ENCODE measurements at regions of chr10 and their contacts with region 1.

Region 1: GRCh38 chr10:101782811-101783735 is at the start of gene NPM3:
- DNase-seq: peak; percentile 78
- ATAC-seq: peak; percentile 66
- H3K4me3 ChIP-seq: peak within 1 kb of the TSS; percentile 18 to 73 (median 67)
- H3K4me3 Mint-ChIP-seq: peak within 1 kb of the TSS; percentile 99
- H3K27ac ChIP-seq: peak within 1 kb of the TSS; percentile 8 to 69
- H3K27ac Mint-ChIP-seq: peak within 1 kb of the TSS; percentile 90
- H3K4me1 ChIP-seq: peaks cover 32 to 57% of the 10 kb centered on the region in 2 donors
- H3K4me1 Mint-ChIP-seq: peaks cover 55% of the 10 kb centered on the region
- H3K27me3 ChIP-seq: peaks cover 0 to 16% (median 7%) of the 10 kb centered on the region in 4 experiments
- H3K27me3 Mint-ChIP-seq: peaks cover 6% of the 10 kb centered on the region
- CTCF ChIP-seq: no peak
- total RNA-seq, gene NPM3: 13.4 and 13.5 TPM in 2 replicates

Region 2: DNA sequence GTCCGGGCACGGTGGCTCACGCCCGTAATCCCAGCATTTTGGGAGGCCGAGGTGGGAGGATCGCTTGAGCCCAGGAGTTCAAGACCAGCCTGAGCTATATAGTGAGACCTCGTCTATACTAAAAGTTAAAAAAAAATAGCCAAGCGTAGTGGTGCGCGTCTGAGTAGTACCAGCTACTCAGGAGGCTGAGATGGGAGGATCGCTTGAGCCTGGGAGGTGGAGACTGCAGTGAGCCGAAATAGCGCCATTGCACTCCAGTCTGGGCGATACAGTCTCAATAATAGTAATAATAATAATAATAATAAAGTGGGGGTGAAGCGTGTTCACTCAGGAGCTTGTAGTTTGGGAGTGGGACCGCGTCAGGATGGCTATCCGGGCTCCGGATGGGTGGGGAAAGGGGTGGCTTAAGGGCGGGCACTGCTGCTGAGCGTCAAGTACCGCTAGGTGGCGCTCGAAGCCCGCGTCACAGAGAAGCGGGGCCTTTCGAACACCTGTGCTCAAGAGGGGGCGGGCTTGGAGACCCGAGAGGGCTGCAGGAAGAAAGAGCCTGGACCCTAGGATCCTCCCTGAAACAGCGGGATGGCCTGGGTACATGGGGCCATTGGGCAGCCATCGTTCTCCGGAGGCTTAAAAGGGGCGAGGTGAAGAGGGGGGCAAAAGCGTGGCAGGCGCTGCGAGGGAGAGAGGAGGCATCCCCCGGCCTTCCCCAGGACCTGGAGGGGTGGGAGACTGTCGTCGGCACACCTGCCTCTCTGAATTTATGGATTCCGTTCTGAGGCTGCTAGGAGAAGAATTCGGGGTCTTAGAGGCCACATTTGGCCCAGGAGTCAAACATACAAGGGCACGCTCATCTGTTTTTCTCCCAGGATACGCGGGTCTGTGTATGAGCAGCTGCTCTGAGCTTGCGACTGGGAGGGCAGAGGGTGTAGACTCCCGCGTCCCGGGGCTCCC is 568.4 kb before region 1 on chr10:
- CTCF ChIA-PET with region 1: interaction called, 23 read pairs
- POLR2A ChIA-PET with region 1: no interaction called
- intact Hi-C with region 1: no loop called
- DNase-seq: peak; percentile 83
- ATAC-seq: peak; percentile 78
- H3K4me3 ChIP-seq: peak overlapping the region in 1 of 5 experiments; percentile 53
- H3K4me3 Mint-ChIP-seq: peak overlapping the region; percentile 80
- H3K27ac ChIP-seq: no peak overlapping the region
- H3K27ac Mint-ChIP-seq: no peak overlapping the region
- H3K4me1 ChIP-seq: peaks cover 44 to 48% of the 10 kb centered on the region in 2 donors
- H3K4me1 Mint-ChIP-seq: peaks cover 34% of the 10 kb centered on the region
- H3K27me3 ChIP-seq: peaks cover 0 to 95% (median 68%) of the 10 kb centered on the region in 4 experiments
- H3K27me3 Mint-ChIP-seq: peaks cover 67% of the 10 kb centered on the region
- CTCF ChIP-seq: peak; percentile 87

Region 3: DNA sequence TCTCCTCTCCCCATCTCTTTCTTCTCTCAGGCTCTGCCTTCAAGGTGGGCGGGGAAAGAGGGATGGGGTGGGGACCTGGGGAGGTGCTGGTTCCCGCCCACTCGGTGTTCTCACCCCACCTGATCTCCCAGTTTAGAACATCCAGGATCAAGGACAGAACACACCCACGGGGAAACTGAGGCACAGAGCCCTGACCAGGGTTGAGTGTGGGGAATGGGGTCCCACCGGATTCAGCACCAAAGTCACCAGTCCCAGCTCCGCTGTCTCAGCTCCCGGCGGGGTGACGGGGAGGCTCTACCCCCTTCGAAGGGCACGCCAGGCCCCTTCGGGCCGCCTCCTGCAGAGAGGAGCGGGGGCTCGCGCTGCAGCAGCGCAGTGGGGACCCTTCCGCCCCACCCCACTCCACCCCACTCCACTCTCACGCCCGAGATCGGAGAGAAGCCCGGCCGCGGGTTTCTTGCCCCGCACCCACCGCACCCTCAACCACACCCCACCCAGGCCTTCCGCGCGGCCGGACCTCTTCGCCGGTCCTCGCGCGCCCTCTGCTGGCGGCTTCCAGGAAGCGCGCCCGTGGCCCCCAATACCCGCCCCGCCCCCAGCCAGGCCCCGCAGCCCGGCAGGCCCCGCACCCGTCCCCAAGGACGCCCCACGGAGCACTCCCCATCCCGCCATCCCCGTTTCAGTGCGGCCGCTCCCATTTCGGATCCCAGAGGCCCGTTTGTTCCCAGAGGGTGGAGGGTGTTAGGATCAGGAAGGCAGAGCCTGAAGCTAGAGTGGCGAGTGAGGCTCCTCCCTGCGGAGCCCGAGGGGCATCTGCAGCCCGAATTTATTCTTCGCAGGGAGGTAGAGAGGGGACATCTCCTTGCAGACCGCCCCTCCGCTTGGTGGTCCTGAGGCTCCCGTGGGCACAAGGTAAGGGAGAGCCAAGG is 213.0 kb before region 1 on chr10:
- CTCF ChIA-PET with region 1: no interaction called
- POLR2A ChIA-PET with region 1: no interaction called
- intact Hi-C with region 1: no loop called
- DNase-seq: peak; percentile 89
- ATAC-seq: peak; percentile 88
- H3K4me3 ChIP-seq: peak overlapping the region; percentile 42 to 69 (median 64)
- H3K4me3 Mint-ChIP-seq: peak overlapping the region; percentile 86
- H3K27ac ChIP-seq: no peak overlapping the region
- H3K27ac Mint-ChIP-seq: peak overlapping the region; percentile 32
- H3K4me1 ChIP-seq: peaks cover 21 to 28% of the 10 kb centered on the region in 2 donors
- H3K4me1 Mint-ChIP-seq: peaks cover 17% of the 10 kb centered on the region
- H3K27me3 ChIP-seq: peaks cover 0 to 47% (median 33%) of the 10 kb centered on the region in 4 experiments
- H3K27me3 Mint-ChIP-seq: peaks cover 39% of the 10 kb centered on the region
- CTCF ChIP-seq: peak; percentile 85

Region 4: GRCh38 chr10:101602761-101603398 is 180.2 kb before region 1 on chr10:
- CTCF ChIA-PET with region 1: interaction called, 28 read pairs
- POLR2A ChIA-PET with region 1: no interaction called
- intact Hi-C with region 1: no loop called
- DNase-seq: peak; percentile 64
- ATAC-seq: peak; percentile 53
- H3K4me3 ChIP-seq: no peak overlapping the region
- H3K4me3 Mint-ChIP-seq: no peak overlapping the region
- H3K27ac ChIP-seq: no peak overlapping the region
- H3K27ac Mint-ChIP-seq: no peak overlapping the region
- H3K4me1 ChIP-seq: no peaks in the 10 kb centered on the region
- H3K4me1 Mint-ChIP-seq: no peaks in the 10 kb centered on the region
- H3K27me3 ChIP-seq: no peaks in the 10 kb centered on the region
- H3K27me3 Mint-ChIP-seq: no peaks in the 10 kb centered on the region
- CTCF ChIP-seq: peak; percentile 82

Region 5: GRCh38 chr10:101797403-101798059 is 14.5 kb after region 1 on chr10:
- CTCF ChIA-PET with region 1: interaction called, 35 read pairs
- POLR2A ChIA-PET with region 1: no interaction called
- intact Hi-C with region 1: loop called (anchors 2 kb)
- DNase-seq: no peak
- ATAC-seq: no peak
- H3K4me3 ChIP-seq: no peak overlapping the region
- H3K4me3 Mint-ChIP-seq: no peak overlapping the region
- H3K27ac ChIP-seq: no peak overlapping the region
- H3K27ac Mint-ChIP-seq: no peak overlapping the region
- H3K4me1 ChIP-seq: no peaks in the 10 kb centered on the region
- H3K4me1 Mint-ChIP-seq: peaks cover 6% of the 10 kb centered on the region
- H3K27me3 ChIP-seq: no peaks in the 10 kb centered on the region
- H3K27me3 Mint-ChIP-seq: no peaks in the 10 kb centered on the region
- CTCF ChIP-seq: no peak

Region 6: GRCh38 chr10:102064868-102065560 is 281.9 kb after region 1 on chr10 and contains the start of gene HPS6:
- CTCF ChIA-PET with region 1: no interaction called
- POLR2A ChIA-PET with region 1: no interaction called
- intact Hi-C with region 1: loop called (anchors 1 kb)
- DNase-seq: peak; percentile 90
- ATAC-seq: peak; percentile 98
- H3K4me3 ChIP-seq: peak within 1 kb of the TSS; percentile 51 to 89 (median 73)
- H3K4me3 Mint-ChIP-seq: peak within 1 kb of the TSS; percentile 92
- H3K27ac ChIP-seq: peak within 1 kb of the TSS; percentile 63 to 90
- H3K27ac Mint-ChIP-seq: peak within 1 kb of the TSS; percentile 92
- H3K4me1 ChIP-seq: peaks cover 15 to 20% of the 10 kb centered on the region in 2 donors
- H3K4me1 Mint-ChIP-seq: peaks cover 23% of the 10 kb centered on the region
- H3K27me3 ChIP-seq: no peaks in the 10 kb centered on the region
- H3K27me3 Mint-ChIP-seq: no peaks in the 10 kb centered on the region
- CTCF ChIP-seq: no peak
- total RNA-seq, gene HPS6: 28.6 and 29.5 TPM in 2 replicates

Region 7: DNA sequence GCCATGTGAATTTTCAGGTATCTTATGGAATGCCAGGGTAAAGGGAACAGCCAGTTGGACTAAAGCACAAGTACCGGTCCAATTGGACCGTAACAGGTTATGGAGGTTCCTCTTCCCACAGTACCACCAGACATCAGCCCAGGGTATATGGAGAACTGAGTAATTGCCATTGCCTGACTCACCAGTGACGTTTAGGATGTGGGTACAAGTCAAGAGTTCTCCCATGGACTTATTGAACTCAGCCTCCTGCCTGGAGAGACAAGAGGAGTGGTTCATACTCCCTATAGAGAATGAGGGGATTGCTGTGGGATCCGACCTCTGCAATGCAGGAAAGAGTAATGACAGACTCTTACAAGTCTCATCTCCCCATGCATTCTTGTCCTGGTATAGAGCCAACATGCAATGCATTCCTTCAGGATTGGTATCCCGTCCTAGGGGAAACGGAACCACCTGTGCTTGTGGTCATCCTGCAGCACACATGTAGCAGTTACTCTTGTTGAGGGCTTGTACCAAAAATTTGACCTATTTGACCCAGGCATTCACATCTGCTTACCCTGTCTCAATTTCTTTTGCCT is 412.3 kb after region 1 on chr10:
- CTCF ChIA-PET with region 1: no interaction called
- POLR2A ChIA-PET with region 1: no interaction called
- intact Hi-C with region 1: no loop called
- DNase-seq: no peak
- ATAC-seq: no peak
- H3K4me3 ChIP-seq: no peak overlapping the region
- H3K4me3 Mint-ChIP-seq: no peak overlapping the region
- H3K27ac ChIP-seq: no peak overlapping the region
- H3K27ac Mint-ChIP-seq: no peak overlapping the region
- H3K4me1 ChIP-seq: no peaks in the 10 kb centered on the region
- H3K4me1 Mint-ChIP-seq: no peaks in the 10 kb centered on the region
- H3K27me3 ChIP-seq: no peaks in the 10 kb centered on the region
- H3K27me3 Mint-ChIP-seq: peaks cover 20% of the 10 kb centered on the region
- CTCF ChIP-seq: no peak

Measured in B cell (primary cell).